Calu3 (cell line): ENCODE measurements at regions of chr10 and their contacts with region 1.

Region 1: DNA sequence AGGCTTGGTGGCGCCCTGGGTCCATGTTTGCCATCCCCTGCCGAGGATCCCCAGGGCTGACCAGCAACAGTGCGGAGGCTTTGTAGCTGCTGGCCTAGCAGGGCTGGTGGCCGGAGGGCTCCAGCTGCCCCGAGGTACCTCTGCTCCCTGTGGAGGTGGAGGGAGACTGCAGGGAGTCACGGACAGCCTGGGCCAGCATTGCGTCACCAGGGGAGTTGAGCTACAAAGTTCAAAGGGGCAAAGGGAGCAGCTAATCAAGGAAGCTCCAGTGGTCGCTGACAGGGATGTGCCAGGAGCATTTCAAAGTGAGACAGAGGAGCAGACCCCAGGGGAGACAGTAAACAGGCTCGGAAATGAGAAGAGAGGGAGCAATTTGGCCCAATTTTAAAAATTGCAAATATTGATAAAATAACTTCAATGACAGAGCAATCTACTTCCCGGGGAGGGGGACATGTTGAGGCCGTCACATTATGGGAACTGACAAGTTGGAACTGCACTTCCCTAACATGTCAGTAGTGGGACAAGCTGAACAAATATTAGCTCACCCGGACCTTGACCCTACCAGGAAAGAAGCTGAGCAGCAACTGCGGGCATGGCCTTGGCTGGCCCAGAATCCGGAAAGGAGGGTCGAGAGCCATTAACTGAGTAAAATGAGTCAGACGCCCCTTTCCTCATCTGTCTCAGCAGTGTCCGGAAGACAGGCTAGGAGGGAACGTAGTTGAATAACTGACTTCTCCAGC is 39.4 kb downstream of the BTBD16 start:
- DNase-seq: peak; percentile 63
- H3K4me3 Mint-ChIP-seq: peak overlapping the region; percentile 49
- H3K27ac Mint-ChIP-seq: peak overlapping the region; percentile 92
- H3K4me1 Mint-ChIP-seq: peaks cover 38% of the 10 kb centered on the region
- H3K27me3 Mint-ChIP-seq: no peaks in the 10 kb centered on the region
- CTCF ChIP-seq: no peak

Region 2: DNA sequence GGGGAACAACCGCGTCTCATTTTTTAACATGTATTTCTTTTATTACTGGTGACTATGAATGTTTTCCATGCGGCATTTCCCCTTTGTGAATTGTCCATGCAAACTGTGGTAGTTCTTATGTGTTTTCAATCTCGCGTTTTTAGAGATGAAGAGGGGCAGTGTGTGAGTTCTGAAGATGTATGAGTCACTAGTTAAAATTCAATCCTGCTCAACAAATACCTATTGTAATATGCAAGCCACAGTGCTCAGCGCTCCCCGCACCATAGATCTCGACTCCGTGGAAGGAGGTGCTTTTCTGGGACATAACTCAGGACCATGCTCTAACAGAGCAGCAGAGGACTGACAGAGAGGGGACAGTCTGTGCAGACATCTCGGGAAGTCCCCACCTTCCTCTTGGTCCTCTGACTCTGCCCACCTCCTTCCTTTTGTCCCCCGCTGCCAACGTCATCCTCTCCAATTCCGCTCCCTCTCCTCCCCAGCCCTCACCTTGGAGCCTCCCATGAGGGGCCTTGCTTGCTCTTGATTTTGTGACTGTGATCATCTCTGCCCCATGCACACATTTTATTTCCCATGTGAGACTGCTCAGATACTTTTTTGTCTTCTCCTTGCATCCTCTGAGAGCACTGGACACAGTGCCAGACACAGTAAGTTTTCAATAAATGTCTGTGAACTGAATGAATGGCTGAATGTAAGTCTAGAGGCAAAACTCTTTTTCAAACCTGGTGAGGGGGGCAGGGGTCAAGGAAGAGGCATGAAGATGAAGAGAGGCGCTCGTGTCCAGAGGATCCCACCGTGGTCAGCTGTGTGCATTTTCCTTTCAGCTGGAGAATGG is 21.4 kb after region 1 on chr10:
- CTCF ChIA-PET with region 1: no interaction called
- intact Hi-C with region 1: loop called (anchors 2 kb)
- DNase-seq: peak; percentile 51
- H3K4me3 Mint-ChIP-seq: peak overlapping the region; percentile 33
- H3K27ac Mint-ChIP-seq: peak overlapping the region; percentile 88
- H3K4me1 Mint-ChIP-seq: peaks cover 15% of the 10 kb centered on the region
- H3K27me3 Mint-ChIP-seq: no peaks in the 10 kb centered on the region
- CTCF ChIP-seq: no peak

Region 3: GRCh38 chr10:122702275-122702674 is 391.8 kb after region 1 on chr10:
- CTCF ChIA-PET with region 1: no interaction called
- intact Hi-C with region 1: no loop called
- DNase-seq: no peak
- H3K4me3 Mint-ChIP-seq: no peak overlapping the region
- H3K27ac Mint-ChIP-seq: no peak overlapping the region
- H3K4me1 Mint-ChIP-seq: no peaks in the 10 kb centered on the region
- H3K27me3 Mint-ChIP-seq: peaks cover 17% of the 10 kb centered on the region
- CTCF ChIP-seq: no peak